ENCODE measurements at regions of chr9 and their contacts with region 1.

Region 1: DNA sequence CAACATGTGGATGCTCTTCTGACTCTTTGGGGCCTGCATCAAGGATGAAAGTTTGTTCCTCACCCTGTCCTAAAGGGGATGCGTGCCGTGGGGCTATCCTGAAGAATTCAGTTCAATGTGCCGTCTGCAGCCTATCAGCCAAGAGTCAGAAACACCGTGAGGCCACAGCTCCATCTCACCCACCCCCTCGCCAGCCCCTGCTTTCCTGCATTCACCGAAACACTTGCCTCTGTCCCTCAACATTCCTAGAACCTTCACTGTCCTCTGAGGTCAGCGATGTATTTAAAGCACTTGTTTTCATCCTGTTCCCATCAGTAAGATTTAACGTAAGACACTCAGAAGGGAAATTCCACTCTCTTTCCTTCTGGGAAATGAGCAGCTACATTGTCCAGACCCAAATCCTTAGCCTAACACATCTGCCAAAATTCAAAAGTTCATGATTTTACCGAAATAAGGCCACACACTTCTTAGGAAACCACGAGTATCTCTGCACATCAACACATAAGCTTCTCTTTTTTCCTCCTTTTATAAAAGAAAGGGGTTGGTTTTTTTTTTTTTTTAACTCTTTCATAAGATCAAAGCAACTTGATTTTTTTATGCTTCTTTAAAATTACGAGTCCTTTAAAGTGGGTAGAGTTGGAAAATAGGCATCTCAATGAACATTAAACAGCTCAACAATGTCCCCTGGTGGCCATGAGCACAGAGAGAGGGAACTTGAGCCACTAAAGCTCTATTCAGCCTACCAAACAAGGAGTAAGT is 100.7 kb downstream of the SUSD1 start:
- DNase-seq: peak; percentile 82
- ATAC-seq: peak; percentile 80
- H3K4me3 ChIP-seq: peak overlapping the region in 1 of 5 experiments; percentile 9
- H3K4me3 Mint-ChIP-seq: peak overlapping the region; percentile 74
- H3K27ac ChIP-seq: peak overlapping the region; percentile 16 to 38
- H3K27ac Mint-ChIP-seq: peak overlapping the region; percentile 77
- H3K4me1 ChIP-seq: peaks cover 39 to 72% of the 10 kb centered on the region in 2 donors
- H3K4me1 Mint-ChIP-seq: peaks cover 65% of the 10 kb centered on the region
- H3K27me3 ChIP-seq: no peaks in the 10 kb centered on the region
- H3K27me3 Mint-ChIP-seq: no peaks in the 10 kb centered on the region
- CTCF ChIP-seq: peak; percentile 99

Region 2: DNA sequence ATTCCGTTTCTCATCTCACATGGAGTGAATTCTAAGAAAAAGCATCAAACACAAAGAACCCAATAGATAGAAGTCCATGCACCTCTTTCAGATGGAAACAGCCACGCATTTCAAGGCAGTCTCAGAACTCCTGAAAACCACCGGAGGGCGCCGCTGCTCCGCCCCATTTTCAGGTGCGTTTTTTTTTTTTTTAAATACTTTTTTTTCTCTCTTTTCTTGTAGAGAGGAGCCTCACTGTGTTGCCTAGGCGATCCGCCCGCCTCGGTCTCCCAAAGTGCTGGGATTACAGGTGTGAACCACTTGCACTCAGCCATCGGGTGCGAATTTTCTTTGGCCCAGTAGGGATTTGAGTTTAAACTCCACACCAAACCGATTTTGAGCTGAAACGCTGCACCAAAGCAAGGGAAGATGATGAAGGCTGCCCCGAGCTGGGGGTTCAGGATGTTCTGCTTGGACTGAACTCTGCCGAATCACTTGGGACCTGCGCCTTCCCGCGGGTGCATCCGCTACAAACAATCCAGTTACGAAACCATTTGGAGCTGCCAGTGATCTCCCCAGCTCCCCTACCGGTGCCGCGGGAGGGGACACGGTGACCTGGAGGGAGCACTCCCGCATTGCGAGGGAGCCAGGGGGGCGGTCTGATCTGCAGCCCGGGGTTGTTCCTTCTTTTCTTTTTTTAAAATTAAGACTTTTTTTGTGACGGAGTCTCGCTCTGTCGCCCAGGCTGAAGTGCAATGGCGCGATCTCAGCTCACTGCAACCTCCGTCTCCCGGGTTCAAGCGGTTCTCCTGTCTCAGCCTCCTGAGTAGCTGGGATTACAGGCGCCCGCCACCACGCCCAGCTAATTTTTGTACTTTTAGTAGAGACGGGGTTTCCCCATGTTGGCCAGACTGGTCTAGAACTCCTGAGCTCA is 476.4 kb before region 1 on chr9:
- CTCF ChIA-PET with region 1: interaction called, 7 read pairs
- POLR2A ChIA-PET with region 1: no interaction called
- intact Hi-C with region 1: loop called (anchors 1 kb)
- DNase-seq: peak; percentile 75
- ATAC-seq: peak; percentile 69
- H3K4me3 ChIP-seq: peak overlapping the region; percentile 39 to 76 (median 59)
- H3K4me3 Mint-ChIP-seq: peak overlapping the region; percentile 87
- H3K27ac ChIP-seq: no peak overlapping the region
- H3K27ac Mint-ChIP-seq: peak overlapping the region; percentile 59
- H3K4me1 ChIP-seq: peaks cover 22 to 23% of the 10 kb centered on the region in 2 donors
- H3K4me1 Mint-ChIP-seq: peaks cover 25% of the 10 kb centered on the region
- H3K27me3 ChIP-seq: peaks cover 0 to 39% (median 20%) of the 10 kb centered on the region in 4 experiments
- H3K27me3 Mint-ChIP-seq: peaks cover 42% of the 10 kb centered on the region
- CTCF ChIP-seq: peak; percentile 76

Region 3: DNA sequence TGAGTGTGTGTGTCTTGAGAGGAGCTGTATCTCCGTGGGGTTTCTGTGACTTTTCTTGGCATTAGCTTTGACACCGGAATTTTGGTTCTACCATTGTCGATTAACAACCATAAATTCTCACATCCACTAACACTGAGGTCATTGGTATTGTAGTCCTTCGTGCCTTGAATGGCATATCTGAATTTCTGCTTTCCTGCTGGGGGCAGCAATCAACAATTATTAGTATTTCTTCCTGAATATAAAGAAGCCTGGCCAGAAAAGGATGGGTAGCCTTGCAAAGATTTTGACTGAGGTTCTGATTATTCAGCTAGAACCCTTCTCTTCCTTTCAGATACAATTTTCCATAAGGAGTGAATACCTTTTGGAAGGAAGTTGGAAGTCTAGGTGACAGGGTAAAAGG is 246.2 kb before region 1 on chr9:
- CTCF ChIA-PET with region 1: interaction called, 46 read pairs
- POLR2A ChIA-PET with region 1: no interaction called
- intact Hi-C with region 1: loop called (anchors 1 kb)
- DNase-seq: peak; percentile 48
- ATAC-seq: peak; percentile 39
- H3K4me3 ChIP-seq: no peak overlapping the region
- H3K4me3 Mint-ChIP-seq: no peak overlapping the region
- H3K27ac ChIP-seq: no peak overlapping the region
- H3K27ac Mint-ChIP-seq: no peak overlapping the region
- H3K4me1 ChIP-seq: peaks cover 3 to 4% of the 10 kb centered on the region in 2 donors
- H3K4me1 Mint-ChIP-seq: peaks cover 9% of the 10 kb centered on the region
- H3K27me3 ChIP-seq: no peaks in the 10 kb centered on the region
- H3K27me3 Mint-ChIP-seq: no peaks in the 10 kb centered on the region
- CTCF ChIP-seq: peak; percentile 9

Region 4: GRCh38 chr9:111916234-111916645 is 158.2 kb before region 1 on chr9:
- CTCF ChIA-PET with region 1: interaction called, 17 read pairs
- POLR2A ChIA-PET with region 1: no interaction called
- intact Hi-C with region 1: no loop called
- DNase-seq: peak; percentile 35
- ATAC-seq: peak; percentile 12
- H3K4me3 ChIP-seq: no peak overlapping the region
- H3K4me3 Mint-ChIP-seq: peak overlapping the region; percentile 69
- H3K27ac ChIP-seq: peak overlapping the region; percentile 35 to 79
- H3K27ac Mint-ChIP-seq: peak overlapping the region; percentile 86
- H3K4me1 ChIP-seq: peaks cover 53 to 66% of the 10 kb centered on the region in 2 donors
- H3K4me1 Mint-ChIP-seq: peaks cover 72% of the 10 kb centered on the region
- H3K27me3 ChIP-seq: no peaks in the 10 kb centered on the region
- H3K27me3 Mint-ChIP-seq: no peaks in the 10 kb centered on the region
- CTCF ChIP-seq: no peak

Region 5: DNA sequence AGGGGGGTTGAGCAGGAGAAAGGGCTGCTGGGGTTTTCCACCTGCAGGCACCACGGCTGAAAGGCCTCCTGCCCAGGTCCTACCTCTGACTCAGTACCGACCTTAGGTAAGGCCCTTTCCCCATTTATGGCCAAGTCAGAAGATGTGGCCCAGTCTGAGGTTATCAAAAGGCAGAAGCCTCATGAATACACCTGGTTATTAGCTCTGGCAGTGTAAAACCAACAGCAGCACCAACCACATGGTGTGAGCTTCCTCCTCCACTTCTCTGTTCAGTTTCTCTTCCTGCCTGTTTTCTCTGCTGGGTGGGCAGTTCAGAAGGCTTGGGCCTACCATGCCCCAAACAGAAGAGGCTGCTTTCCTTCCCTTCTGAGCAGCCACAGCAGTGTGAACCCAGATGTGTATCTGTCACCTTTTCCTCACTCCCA is 90.9 kb before region 1 on chr9:
- CTCF ChIA-PET with region 1: interaction called, 3 read pairs
- POLR2A ChIA-PET with region 1: interaction called, 6 read pairs
- intact Hi-C with region 1: loop called (anchors 10 kb)
- DNase-seq: peak; percentile 83
- ATAC-seq: peak; percentile 87
- H3K4me3 ChIP-seq: no peak overlapping the region
- H3K4me3 Mint-ChIP-seq: peak overlapping the region; percentile 44
- H3K27ac ChIP-seq: peak overlapping the region; percentile 70 to 85
- H3K27ac Mint-ChIP-seq: peak overlapping the region; percentile 95
- H3K4me1 ChIP-seq: peaks cover 45 to 54% of the 10 kb centered on the region in 2 donors
- H3K4me1 Mint-ChIP-seq: peaks cover 57% of the 10 kb centered on the region
- H3K27me3 ChIP-seq: no peaks in the 10 kb centered on the region
- H3K27me3 Mint-ChIP-seq: no peaks in the 10 kb centered on the region
- CTCF ChIP-seq: no peak

Region 6: GRCh38 chr9:112037281-112038016 is 37.0 kb before region 1 on chr9:
- CTCF ChIA-PET with region 1: interaction called, 21 read pairs
- POLR2A ChIA-PET with region 1: interaction called, 5 read pairs
- intact Hi-C with region 1: loop called (anchors 5 kb)
- DNase-seq: peak; percentile 84
- ATAC-seq: peak; percentile 68
- H3K4me3 ChIP-seq: peak overlapping the region in 1 of 5 experiments; percentile 18
- H3K4me3 Mint-ChIP-seq: peak overlapping the region; percentile 81
- H3K27ac ChIP-seq: peak overlapping the region; percentile 56 to 72
- H3K27ac Mint-ChIP-seq: peak overlapping the region; percentile 95
- H3K4me1 ChIP-seq: peaks cover 75 to 77% of the 10 kb centered on the region in 2 donors
- H3K4me1 Mint-ChIP-seq: peaks cover 72% of the 10 kb centered on the region
- H3K27me3 ChIP-seq: no peaks in the 10 kb centered on the region
- H3K27me3 Mint-ChIP-seq: no peaks in the 10 kb centered on the region
- CTCF ChIP-seq: no peak

Region 7: DNA sequence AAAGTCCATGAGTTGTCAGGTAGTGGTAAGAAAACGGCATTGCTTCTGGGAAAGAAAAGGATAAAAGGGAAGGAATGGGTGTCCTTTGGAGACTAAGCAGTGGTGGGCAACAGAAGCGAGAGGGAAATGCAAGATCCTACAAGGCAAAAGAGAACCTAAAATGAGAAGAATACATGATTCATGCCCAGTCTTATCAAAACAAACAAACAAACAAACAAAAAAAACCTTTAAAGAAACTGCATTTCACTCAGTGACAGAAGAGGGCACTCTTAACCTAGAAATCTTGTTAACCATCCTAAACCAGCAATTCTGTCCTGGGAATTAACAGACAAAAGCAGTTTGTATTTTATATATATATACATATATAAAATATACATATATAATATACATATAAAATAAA is 12.2 kb after region 1 on chr9:
- CTCF ChIA-PET with region 1: interaction called, 20 read pairs
- POLR2A ChIA-PET with region 1: interaction called, 4 read pairs
- intact Hi-C with region 1: no loop called
- DNase-seq: peak; percentile 36
- ATAC-seq: no peak
- H3K4me3 ChIP-seq: no peak overlapping the region
- H3K4me3 Mint-ChIP-seq: no peak overlapping the region
- H3K27ac ChIP-seq: no peak overlapping the region
- H3K27ac Mint-ChIP-seq: no peak overlapping the region
- H3K4me1 ChIP-seq: no peaks in the 10 kb centered on the region
- H3K4me1 Mint-ChIP-seq: no peaks in the 10 kb centered on the region
- H3K27me3 ChIP-seq: no peaks in the 10 kb centered on the region
- H3K27me3 Mint-ChIP-seq: no peaks in the 10 kb centered on the region
- CTCF ChIP-seq: peak; percentile 68

Region 8: DNA sequence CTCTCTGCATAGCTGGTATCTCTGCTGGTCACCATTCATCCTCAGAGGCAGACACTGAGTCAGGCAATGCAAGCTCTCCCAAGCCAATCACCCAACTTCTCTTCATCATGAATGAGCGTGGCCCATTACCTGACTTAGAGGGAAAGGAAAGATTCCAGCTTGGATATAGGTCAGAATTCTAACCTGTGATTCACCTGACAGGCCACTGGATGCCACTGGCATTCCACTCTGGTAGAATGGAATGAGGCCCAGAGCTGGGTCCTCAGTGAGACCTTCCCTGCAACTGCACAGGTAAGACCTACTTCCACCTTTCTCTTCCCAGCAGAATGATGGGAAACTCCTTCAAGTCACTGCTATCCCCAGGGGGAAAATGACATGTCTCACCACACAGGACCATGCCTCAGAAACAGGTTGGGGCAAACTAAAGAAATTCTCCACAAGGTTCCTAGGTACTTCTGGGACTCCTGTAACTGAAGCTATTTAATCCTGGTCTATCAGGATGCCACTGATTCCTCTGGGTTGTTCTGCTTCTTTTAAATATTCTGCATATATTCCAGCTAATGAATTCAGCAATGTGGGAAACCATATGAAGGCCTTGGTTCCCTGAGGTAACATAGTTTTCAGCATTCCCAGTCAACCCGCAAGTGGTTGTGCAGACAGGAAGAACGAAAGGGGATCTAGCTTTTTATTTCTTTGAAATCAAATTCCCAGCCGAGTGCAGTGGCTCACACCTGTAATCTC is 38.7 kb after region 1 on chr9:
- CTCF ChIA-PET with region 1: no interaction called
- POLR2A ChIA-PET with region 1: no interaction called
- intact Hi-C with region 1: no loop called
- DNase-seq: no peak
- ATAC-seq: no peak
- H3K4me3 ChIP-seq: no peak overlapping the region
- H3K4me3 Mint-ChIP-seq: no peak overlapping the region
- H3K27ac ChIP-seq: no peak overlapping the region
- H3K27ac Mint-ChIP-seq: no peak overlapping the region
- H3K4me1 ChIP-seq: peaks cover 26% of the 10 kb centered on the region in 2 donors
- H3K4me1 Mint-ChIP-seq: peaks cover 45% of the 10 kb centered on the region
- H3K27me3 ChIP-seq: no peaks in the 10 kb centered on the region
- H3K27me3 Mint-ChIP-seq: no peaks in the 10 kb centered on the region
- CTCF ChIP-seq: no peak

Region 9: DNA sequence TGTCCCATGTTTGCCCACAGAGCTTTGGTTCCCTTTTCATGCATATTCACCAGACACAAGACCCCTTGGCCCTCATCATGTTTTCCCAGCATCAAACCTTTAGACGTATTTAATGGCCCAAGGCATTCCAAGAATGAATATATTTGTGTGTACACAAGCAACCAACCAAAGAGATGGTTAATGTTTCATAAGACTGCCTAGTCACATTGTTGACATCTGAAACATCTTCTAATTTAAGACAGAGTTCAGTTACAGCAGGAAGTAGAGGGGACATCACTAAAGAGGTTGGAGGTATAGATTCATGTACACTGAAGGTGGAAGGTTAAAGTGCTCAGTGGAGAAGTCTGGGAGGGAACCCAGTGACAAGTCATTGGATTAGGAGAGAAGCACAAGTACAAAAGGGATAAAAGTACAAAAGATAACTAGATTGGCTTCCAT is 51.5 kb after region 1 on chr9:
- CTCF ChIA-PET with region 1: no interaction called
- POLR2A ChIA-PET with region 1: no interaction called
- intact Hi-C with region 1: no loop called
- DNase-seq: no peak
- ATAC-seq: no peak
- H3K4me3 ChIP-seq: no peak overlapping the region
- H3K4me3 Mint-ChIP-seq: no peak overlapping the region
- H3K27ac ChIP-seq: no peak overlapping the region
- H3K27ac Mint-ChIP-seq: no peak overlapping the region
- H3K4me1 ChIP-seq: no peaks in the 10 kb centered on the region
- H3K4me1 Mint-ChIP-seq: peaks cover 2% of the 10 kb centered on the region
- H3K27me3 ChIP-seq: no peaks in the 10 kb centered on the region
- H3K27me3 Mint-ChIP-seq: no peaks in the 10 kb centered on the region
- CTCF ChIP-seq: no peak

Measured in B cell (primary cell).